Ovary (tissue), 10 donors: ENCODE measurements at regions of chr9 and their contacts with region 1.

Region 1: GRCh38 chr9:37913480-37914153 is 9.7 kb upstream of the SLC25A51 start:
- DNase-seq: peak; percentile 56 to 82 (median 79)
- H3K4me3 ChIP-seq: no peak overlapping the region
- H3K27ac ChIP-seq: no peak overlapping the region
- H3K4me1 ChIP-seq: peaks cover 4% of the 10 kb centered on the region
- H3K27me3 ChIP-seq: no peaks in the 10 kb centered on the region
- CTCF ChIP-seq: peak; percentile 81 to 89 (median 87)
- EP300 ChIP-seq: no peak
- POLR2A ChIP-seq: no peak

Region 2: GRCh38 chr9:37899041-37899440 is 14.6 kb before region 1 on chr9:
- intact Hi-C with region 1: no loop called
- DNase-seq: no peak
- H3K4me3 ChIP-seq: no peak overlapping the region
- H3K27ac ChIP-seq: no peak overlapping the region
- H3K4me1 ChIP-seq: peaks cover 2% of the 10 kb centered on the region
- H3K27me3 ChIP-seq: no peaks in the 10 kb centered on the region
- CTCF ChIP-seq: no peak
- EP300 ChIP-seq: no peak
- POLR2A ChIP-seq: no peak

Region 3: DNA sequence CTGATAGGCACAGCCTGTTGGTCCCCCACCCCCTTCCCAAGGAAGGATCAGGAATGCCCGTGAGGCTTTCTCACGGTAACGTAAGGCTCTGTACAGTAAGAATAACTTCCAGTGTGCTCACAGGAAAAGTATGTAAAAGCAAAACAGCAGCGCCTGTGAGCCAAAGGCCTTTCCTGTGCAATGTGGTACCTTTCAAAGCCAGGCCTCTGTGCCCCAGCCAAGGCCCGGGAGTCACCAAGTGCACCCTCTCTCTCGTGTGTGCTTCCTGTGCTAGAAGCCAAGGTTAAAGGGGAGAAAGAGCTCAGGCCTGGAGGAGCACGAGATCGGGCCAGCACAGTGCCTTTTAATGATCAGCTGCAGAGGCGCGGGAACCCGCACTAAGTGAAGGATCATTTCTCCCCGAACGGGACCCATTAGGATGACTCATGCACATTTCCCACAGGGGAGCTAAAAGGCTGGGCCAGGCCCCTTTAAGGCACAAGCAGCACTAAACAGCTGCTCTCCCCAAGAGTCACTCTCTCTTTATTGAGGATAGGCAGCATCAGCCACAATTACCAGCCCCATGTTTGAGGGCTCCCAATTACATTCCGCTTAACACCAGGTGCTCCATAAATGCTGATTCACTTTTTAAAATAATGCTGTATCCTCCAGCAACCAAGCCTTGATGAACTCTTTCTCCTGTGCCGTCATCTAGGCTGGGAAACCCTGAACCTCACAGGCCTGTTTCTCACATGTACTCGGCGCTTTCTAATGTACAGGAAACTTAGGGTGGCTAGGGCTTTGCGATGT is 112.6 kb after region 1 on chr9:
- intact Hi-C with region 1: no loop called
- DNase-seq: peak; percentile 38 to 68 (median 57)
- H3K4me3 ChIP-seq: no peak overlapping the region
- H3K27ac ChIP-seq: peak overlapping the region in 1 of 2 donors; percentile 48
- H3K4me1 ChIP-seq: peaks cover 12% of the 10 kb centered on the region
- H3K27me3 ChIP-seq: no peaks in the 10 kb centered on the region
- CTCF ChIP-seq: no peak
- EP300 ChIP-seq: no peak
- POLR2A ChIP-seq: no peak

Region 4: GRCh38 chr9:38068866-38069629 is 155.4 kb after region 1 on chr9 and contains the start of gene SHB:
- intact Hi-C with region 1: loop called in 2 of 4 experiments (anchors 5 kb)
- DNase-seq: peak; percentile 67 to 81 (median 77)
- H3K4me3 ChIP-seq: peak within 1 kb of the TSS; percentile 66
- H3K27ac ChIP-seq: peak within 1 kb of the TSS; percentile 64 to 74
- H3K4me1 ChIP-seq: peaks cover 4% of the 10 kb centered on the region
- H3K27me3 ChIP-seq: no peaks in the 10 kb centered on the region
- CTCF ChIP-seq: peak in 1 of 3 donors; percentile 49
- EP300 ChIP-seq: no peak
- POLR2A ChIP-seq: peak; percentile 32
- total RNA-seq, gene SHB: 5.7 to 23.8 (median 9.0) TPM

Region 5: DNA sequence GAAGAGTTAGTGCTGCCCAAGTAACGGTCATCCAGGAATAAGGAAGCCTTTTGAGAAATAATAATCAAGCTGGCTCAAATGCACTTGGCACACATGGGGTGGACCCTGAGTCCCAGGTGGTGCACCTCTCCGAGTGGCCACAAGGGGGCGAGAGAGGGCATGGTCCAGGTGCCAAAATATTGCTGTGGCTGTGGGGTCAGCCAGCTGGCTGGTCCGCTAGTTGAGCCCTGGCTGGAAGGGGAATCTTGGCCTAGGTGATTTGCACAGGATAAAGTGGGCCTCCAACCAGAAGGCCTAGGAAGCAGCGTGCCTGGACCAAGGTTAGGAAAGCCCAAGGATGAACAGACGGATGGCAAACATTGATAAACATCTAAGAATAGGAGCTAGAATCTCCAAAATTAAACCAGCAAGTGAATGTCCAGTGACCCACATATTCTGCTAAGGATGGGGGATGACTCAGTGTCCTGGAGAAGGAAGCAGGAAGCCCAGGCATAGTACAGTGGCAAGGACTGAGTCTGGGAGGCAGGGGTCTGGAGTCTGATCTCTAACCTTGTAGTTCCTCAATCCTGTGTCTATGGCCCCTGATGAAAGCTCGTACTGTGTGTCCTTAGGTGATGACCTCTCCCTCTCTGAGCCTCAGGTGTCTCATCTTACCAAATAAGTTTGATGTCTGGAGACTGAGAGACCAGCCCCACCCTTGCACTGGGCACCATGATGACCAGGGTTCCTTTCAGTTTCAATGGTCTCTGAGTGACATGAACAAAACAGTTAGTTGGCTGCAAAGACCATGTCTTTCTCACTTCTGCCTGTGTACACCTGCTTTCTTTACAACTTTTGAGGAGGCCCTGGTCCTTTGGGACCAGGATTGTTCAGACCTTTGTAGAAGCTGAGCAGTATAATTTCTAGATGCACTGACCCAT is 174.6 kb after region 1 on chr9:
- intact Hi-C with region 1: loop called in 1 of 4 experiments (anchors 5 kb)
- DNase-seq: peak; percentile 60 to 85 (median 76)
- H3K4me3 ChIP-seq: no peak overlapping the region
- H3K27ac ChIP-seq: no peak overlapping the region
- H3K4me1 ChIP-seq: no peaks in the 10 kb centered on the region
- H3K27me3 ChIP-seq: no peaks in the 10 kb centered on the region
- CTCF ChIP-seq: peak; percentile 62 to 66 (median 63)
- EP300 ChIP-seq: no peak
- POLR2A ChIP-seq: no peak

Region 6: GRCh38 chr9:38362852-38363593 is 449.4 kb after region 1 on chr9:
- intact Hi-C with region 1: loop called (anchors 2 to 10 kb)
- DNase-seq: peak; percentile 40 to 54 (median 51)
- H3K4me3 ChIP-seq: no peak overlapping the region
- H3K27ac ChIP-seq: no peak overlapping the region
- H3K4me1 ChIP-seq: peaks cover 8% of the 10 kb centered on the region
- H3K27me3 ChIP-seq: no peaks in the 10 kb centered on the region
- CTCF ChIP-seq: peak; percentile 48 to 63 (median 55)
- EP300 ChIP-seq: no peak
- POLR2A ChIP-seq: no peak

Region 7: DNA sequence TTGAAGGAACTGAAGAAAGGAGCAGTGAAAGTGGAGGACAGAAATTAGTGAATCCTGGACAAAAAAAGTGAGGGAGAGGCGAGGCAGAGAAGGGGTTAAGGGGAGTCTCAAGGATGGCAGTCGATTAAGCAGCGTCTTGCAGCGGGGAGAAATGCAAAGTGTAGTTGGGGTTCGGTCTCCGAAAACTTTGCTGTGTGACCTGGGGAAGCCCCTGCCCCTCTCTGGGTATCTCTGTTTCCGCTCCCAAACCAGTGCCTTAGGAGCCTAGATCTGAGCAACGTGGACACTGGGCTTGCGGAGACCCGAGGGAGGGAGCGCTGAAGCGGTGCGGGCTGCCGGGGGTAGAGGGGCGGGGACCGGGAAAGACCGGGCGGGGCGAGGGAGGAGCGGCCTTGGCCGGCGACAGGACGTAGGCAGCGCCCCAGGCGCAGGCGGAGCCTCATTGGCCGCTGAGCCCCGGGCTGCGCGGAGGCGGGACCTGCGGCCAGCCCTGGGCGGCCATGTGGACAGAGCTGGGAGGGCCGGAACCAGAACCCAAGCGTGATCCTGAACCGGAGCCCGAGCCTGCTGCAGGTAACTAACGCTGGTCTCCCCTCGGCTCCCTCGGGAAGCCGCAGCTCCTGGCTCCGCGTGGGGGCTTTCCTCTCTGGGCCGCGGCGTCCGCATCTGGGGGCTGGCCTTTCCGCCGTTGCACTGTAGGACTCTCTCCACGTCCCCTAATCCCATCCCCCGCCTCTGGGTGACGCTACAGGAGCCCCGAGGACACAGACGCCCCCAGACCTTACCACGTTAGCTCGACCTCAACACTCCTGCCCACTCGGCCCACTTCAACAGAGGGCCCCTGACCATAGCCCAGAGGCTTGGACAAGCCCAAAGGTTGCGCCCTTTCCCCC is 478.9 kb after region 1 on chr9 and contains the start of gene ALDH1B1:
- intact Hi-C with region 1: loop called in 1 of 4 experiments (anchors 10 kb)
- DNase-seq: peak; percentile 82 to 90 (median 87)
- H3K4me3 ChIP-seq: peak within 1 kb of the TSS; percentile 84
- H3K27ac ChIP-seq: peak within 1 kb of the TSS; percentile 50 to 76
- H3K4me1 ChIP-seq: peaks cover 18% of the 10 kb centered on the region
- H3K27me3 ChIP-seq: no peaks in the 10 kb centered on the region
- CTCF ChIP-seq: no peak
- EP300 ChIP-seq: no peak
- POLR2A ChIP-seq: peak; percentile 10
- total RNA-seq, gene ALDH1B1: 7.9 to 47.2 (median 24.3) TPM

Region 8: GRCh38 chr9:38408719-38409118 is 495.1 kb after region 1 on chr9:
- intact Hi-C with region 1: loop called in 2 of 4 experiments (anchors 10 kb)
- DNase-seq: no peak
- H3K4me3 ChIP-seq: no peak overlapping the region
- H3K27ac ChIP-seq: no peak overlapping the region
- H3K4me1 ChIP-seq: no peaks in the 10 kb centered on the region
- H3K27me3 ChIP-seq: no peaks in the 10 kb centered on the region
- CTCF ChIP-seq: no peak
- EP300 ChIP-seq: no peak
- POLR2A ChIP-seq: no peak

Region 9: GRCh38 chr9:38432922-38433510 is 519.4 kb after region 1 on chr9:
- intact Hi-C with region 1: loop called in 1 of 4 experiments (anchors 10 kb)
- DNase-seq: no peak
- H3K4me3 ChIP-seq: no peak overlapping the region
- H3K27ac ChIP-seq: no peak overlapping the region
- H3K4me1 ChIP-seq: no peaks in the 10 kb centered on the region
- H3K27me3 ChIP-seq: no peaks in the 10 kb centered on the region
- CTCF ChIP-seq: peak; percentile 15 to 28 (median 22)
- EP300 ChIP-seq: no peak
- POLR2A ChIP-seq: no peak